Activated T-helper 2 cell treated with anti-CD3 and anti-CD28 coated beads, Interferon-gamma antibody, Interleukin-2, Interleukin-4, amounts not matched to agents 10 μg/mL and 5 μg/mL and 100 μg/mL, durations not matched to agents 14 hours and 24 hours and 36 hours (primary cell): ENCODE measurements at regions of chr3 and their contacts with region 1.

Region 1: GRCh38 chr3:58355179-58355578 is 22.5 kb downstream of the PXK start:
- DNase-seq: no peak
- H3K4me3 Mint-ChIP-seq: no peak overlapping the region
- H3K27ac Mint-ChIP-seq: no peak overlapping the region
- H3K4me1 Mint-ChIP-seq: peaks cover 70% of the 10 kb centered on the region
- H3K27me3 Mint-ChIP-seq: no peaks in the 10 kb centered on the region

Region 2: GRCh38 chr3:57961828-57962447 is 393.2 kb before region 1 on chr3:
- intact Hi-C with region 1: no loop called
- DNase-seq: no peak
- H3K4me3 Mint-ChIP-seq: no peak overlapping the region
- H3K27ac Mint-ChIP-seq: no peak overlapping the region
- H3K4me1 Mint-ChIP-seq: peaks cover 4% of the 10 kb centered on the region
- H3K27me3 Mint-ChIP-seq: no peaks in the 10 kb centered on the region

Region 3: GRCh38 chr3:58332575-58333188 is 22.5 kb before region 1 on chr3 and contains the start of gene PXK:
- intact Hi-C with region 1: loop called (anchors 1 kb)
- DNase-seq: peak; percentile 78
- H3K4me3 Mint-ChIP-seq: peak within 1 kb of the TSS; percentile 100
- H3K27ac Mint-ChIP-seq: peak within 1 kb of the TSS; percentile 90
- H3K4me1 Mint-ChIP-seq: peaks cover 46% of the 10 kb centered on the region
- H3K27me3 Mint-ChIP-seq: no peaks in the 10 kb centered on the region
- total RNA-seq, gene PXK: 47.6 and 48.7 TPM in 2 replicates

Region 4: DNA sequence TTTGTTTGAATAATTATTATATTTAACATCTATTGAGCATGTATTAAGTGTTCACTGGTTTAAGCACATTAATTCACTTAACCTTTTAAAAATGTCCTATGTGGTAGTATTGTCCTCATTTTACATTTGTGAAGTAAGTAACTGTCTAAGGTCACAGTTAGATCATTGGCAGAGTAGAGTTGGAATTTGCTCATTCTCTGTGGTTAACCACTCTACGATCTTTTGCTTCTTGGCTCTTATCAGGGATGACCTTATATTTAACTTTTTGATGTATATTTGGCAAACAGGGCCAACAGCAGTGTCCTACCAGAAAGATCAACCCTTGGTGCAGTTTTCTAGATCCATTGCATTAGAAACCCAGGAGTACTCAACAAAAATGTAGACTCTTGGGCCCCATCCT is 11.5 kb after region 1 on chr3:
- intact Hi-C with region 1: loop called (anchors 1 kb)
- DNase-seq: no peak
- H3K4me3 Mint-ChIP-seq: peak overlapping the region; percentile 7
- H3K27ac Mint-ChIP-seq: peak overlapping the region; percentile 76
- H3K4me1 Mint-ChIP-seq: peaks cover 48% of the 10 kb centered on the region
- H3K27me3 Mint-ChIP-seq: no peaks in the 10 kb centered on the region

Region 5: GRCh38 chr3:58414538-58415197 is 59.5 kb after region 1 on chr3:
- intact Hi-C with region 1: loop called (anchors 2 kb)
- DNase-seq: peak; percentile 37
- H3K4me3 Mint-ChIP-seq: no peak overlapping the region
- H3K27ac Mint-ChIP-seq: peak overlapping the region; percentile 45
- H3K4me1 Mint-ChIP-seq: peaks cover 14% of the 10 kb centered on the region
- H3K27me3 Mint-ChIP-seq: no peaks in the 10 kb centered on the region

Region 6: DNA sequence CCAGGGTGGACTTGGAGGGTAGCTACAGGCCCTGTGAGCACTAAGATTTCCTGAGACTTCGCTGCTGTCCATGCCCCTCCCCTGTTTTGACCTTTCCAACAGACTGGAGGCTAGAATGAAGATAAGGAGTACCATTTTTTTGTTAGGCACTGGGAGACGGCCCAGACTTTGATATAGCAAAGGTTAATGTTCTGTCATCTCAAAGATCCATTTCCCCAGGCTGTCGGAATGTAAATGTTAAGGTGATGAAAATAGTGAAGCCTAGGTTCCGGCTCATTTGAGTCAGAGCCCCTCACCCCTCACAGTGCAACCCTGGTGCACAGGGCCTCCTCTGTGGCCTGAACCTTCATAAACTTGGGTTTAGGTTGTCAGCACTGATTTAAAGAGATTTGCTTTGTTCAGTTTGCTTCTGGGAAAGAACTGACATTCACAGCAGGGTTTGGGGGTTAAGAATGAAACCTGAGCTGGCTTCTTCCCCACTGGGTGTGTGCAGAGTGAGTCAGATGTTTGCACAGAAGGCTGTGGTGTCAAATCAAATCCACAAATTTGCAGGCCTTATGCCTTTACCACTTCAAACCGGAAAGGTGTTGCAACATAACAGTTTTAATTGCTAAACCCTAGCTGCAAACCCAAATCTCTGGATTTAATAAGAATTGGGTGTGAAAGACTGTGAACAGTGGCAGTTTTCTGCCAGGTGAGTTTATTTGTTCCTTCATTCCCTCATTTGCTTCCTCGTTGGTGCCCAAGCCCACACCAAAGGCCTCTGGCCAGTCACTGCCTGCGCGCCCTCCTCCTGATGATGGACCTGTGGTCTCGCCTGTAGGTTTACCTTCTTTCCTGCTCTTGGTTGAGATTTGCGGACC is 116.1 kb after region 1 on chr3:
- intact Hi-C with region 1: loop called (anchors 5 kb)
- DNase-seq: peak; percentile 62
- H3K4me3 Mint-ChIP-seq: no peak overlapping the region
- H3K27ac Mint-ChIP-seq: peak overlapping the region; percentile 76
- H3K4me1 Mint-ChIP-seq: peaks cover 48% of the 10 kb centered on the region
- H3K27me3 Mint-ChIP-seq: no peaks in the 10 kb centered on the region